Breast epithelium (tissue), 4 donors: ENCODE measurements at regions of chr19 and their contacts with region 1.

Region 1: DNA sequence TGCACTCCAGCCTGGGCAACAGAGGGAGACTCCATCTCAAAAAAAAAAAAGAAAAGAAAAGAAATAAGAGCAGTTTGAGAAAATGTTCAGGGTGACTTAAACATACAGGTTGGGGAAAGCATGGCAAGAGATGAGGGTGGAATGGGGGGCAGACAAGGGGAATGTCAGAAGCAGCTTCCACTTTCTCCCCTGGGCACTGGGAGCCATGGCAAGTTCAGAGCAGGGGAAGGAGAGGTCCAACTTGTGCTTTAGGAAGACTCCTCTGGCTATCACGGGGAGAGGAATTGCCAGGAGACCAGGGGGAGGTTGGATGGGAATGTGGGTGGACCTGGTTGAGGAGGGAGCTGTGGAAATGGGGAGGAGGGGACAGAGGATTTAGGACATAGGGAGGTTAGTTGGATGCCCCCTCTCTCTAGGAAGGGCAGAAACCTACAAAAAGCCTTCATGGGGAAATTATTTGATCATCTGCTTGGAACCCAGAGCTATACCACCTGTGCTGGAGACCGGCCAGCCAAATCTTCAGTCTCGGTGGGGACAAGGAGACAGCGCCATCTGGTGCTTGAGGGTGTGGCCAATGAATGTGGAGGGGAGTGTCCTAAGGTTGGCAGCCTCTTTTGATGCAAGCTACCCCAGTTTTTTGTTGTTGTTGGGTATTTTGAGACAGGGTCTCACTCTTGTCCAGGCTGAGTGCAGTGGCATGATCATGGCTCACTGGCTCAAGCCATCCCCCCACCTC is 7.3 kb upstream of the STRN4 start:
- DNase-seq: no peak
- H3K4me3 ChIP-seq: no peak overlapping the region
- H3K27ac ChIP-seq: no peak overlapping the region
- H3K4me1 ChIP-seq: no peaks in the 10 kb centered on the region
- H3K27me3 ChIP-seq: no peaks in the 10 kb centered on the region
- CTCF ChIP-seq: peak in 1 of 3 donors; percentile 32
- POLR2A ChIP-seq: no peak

Region 2: DNA sequence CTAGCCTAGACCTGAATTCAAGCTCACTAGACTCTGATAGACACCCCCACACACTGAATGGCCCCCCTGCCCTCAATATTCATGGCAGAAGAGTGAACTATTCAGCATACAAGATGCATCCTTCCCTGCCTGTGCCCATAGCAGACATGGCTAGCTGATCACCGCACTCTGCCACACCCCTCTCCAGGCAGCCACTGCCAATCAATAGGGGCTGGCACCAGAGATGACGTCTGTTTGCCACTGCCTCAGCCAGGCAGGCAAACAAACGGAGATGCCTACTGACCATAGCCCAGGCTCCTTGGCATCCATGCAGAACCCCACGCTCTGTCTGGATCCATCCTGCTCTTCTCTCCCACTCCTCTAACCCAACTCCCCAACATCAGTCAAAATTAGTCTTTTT is 252.3 kb after region 1 on chr19:
- intact Hi-C with region 1: loop called (anchors 10 kb)
- DNase-seq: no peak
- H3K4me3 ChIP-seq: no peak overlapping the region
- H3K27ac ChIP-seq: no peak overlapping the region
- H3K4me1 ChIP-seq: no peaks in the 10 kb centered on the region
- H3K27me3 ChIP-seq: no peaks in the 10 kb centered on the region
- CTCF ChIP-seq: no peak
- POLR2A ChIP-seq: no peak